Caco-2 (cell line): ENCODE measurements at regions of chr5 and their contacts with region 1.

Region 1: DNA sequence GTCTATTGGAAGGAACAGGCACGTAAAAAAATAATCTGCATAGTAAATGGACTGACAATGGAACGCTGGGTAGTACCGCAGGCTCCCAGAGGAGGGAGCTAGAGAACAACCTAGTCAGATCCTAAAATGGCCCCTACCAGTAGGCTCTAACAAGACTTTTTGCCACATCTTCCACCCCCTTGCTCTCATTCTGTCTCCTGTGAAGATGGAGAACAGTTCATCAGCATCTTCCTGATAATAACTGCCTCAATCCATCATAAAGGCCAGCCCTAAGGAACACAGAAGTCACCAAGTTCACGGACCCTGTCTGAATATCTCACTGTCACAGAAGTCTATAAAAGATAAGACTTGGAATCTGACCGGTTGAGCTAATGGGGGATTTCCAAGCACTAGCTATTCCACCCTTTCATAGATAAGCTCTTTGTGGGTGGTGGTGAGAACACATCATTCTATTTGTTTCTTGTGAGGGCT is 133.4 kb downstream of the SLC1A3 start:
- DNase-seq: peak; percentile 78 to 86
- H3K4me3 ChIP-seq: no peak overlapping the region
- H3K4me3 Mint-ChIP-seq: peak overlapping the region; percentile 46
- H3K27ac Mint-ChIP-seq: no peak overlapping the region
- H3K4me1 ChIP-seq: peaks cover 12% of the 10 kb centered on the region
- H3K4me1 Mint-ChIP-seq: peaks cover 19% of the 10 kb centered on the region
- H3K27me3 ChIP-seq: no peaks in the 10 kb centered on the region
- H3K27me3 Mint-ChIP-seq: peaks cover 5% of the 10 kb centered on the region
- CTCF ChIP-seq: peak; percentile 91 to 94

Region 2: DNA sequence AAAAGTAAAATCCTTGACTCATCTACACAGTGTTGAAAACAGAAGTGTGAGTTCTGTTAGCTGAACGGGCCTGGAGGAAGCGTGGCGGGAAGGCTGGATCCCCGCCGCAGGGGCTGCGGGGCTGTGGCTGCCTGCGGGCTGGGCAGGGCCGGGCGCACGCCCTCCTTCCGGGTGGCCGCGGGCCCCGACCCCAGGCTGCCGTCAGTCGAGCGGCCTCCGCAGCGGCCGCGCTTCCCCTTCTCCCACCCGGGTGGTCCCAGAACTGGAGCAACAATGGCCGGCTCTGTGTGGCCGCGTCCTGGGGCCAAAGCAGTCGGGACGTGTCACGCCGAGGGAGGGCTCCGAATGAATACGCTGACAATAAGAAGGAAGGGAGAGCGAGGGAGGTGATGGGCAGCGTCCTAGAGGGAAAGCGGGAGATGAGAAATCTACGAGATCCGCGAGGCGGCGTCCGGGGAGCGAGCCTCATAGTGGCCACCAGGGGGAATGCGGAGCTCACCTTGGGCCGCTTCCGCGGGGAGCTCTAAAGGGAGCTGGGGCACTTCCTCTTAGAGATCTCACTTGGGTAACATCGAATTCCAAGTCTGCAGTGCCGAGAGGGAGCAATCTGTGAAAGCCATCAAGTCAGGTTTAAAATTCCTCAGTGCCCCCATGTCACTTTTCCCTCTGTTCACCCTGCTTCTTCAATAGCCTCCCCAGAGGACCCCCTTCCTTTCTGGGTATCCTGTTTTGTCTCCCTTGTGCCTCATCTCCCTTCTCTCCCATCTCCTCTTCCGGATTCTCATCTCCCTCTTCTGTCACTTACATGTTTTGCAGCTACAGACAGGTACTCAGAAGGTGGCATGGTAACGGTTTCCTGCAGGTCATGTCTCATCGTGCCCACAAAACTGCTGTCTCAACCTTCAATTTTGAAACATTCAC is 49.5 kb before region 1 on chr5:
- CTCF ChIA-PET with region 1: no interaction called
- POLR2A ChIA-PET with region 1: no interaction called
- intact Hi-C with region 1: no loop called
- DNase-seq: peak; percentile 90 to 91
- H3K4me3 ChIP-seq: peak overlapping the region; percentile 71
- H3K4me3 Mint-ChIP-seq: peak overlapping the region; percentile 75
- H3K27ac Mint-ChIP-seq: peak overlapping the region; percentile 28
- H3K4me1 ChIP-seq: peaks cover 14% of the 10 kb centered on the region; the same call in 1 of the 2 replicates
- H3K4me1 Mint-ChIP-seq: peaks cover 10% of the 10 kb centered on the region
- H3K27me3 ChIP-seq: no peaks in the 10 kb centered on the region
- H3K27me3 Mint-ChIP-seq: no peaks in the 10 kb centered on the region
- CTCF ChIP-seq: peak; percentile 80 to 91

Region 3: DNA sequence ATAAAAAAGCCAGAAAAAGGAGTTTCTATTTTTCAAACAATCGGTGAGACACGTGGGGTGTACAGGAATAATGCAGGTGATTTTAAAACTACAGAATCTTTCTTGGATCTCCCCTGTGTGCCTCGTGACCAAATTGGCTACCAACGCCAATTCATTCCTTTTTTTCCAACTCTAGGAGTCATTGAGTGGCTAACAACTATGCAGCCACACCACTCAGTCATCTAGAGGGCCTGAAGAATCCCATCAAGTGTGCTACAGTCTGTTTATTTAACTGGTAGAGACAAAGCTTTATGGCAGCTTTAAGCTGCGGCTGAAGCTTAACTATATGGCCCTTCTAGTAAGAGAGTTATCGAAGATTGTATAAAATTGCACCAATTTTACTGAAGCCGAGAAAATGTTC is 23.7 kb after region 1 on chr5:
- CTCF ChIA-PET with region 1: interaction called, 3 read pairs
- POLR2A ChIA-PET with region 1: no interaction called
- intact Hi-C with region 1: loop called (anchors 1 kb)
- DNase-seq: no peak
- H3K4me3 ChIP-seq: no peak overlapping the region
- H3K4me3 Mint-ChIP-seq: no peak overlapping the region
- H3K27ac Mint-ChIP-seq: no peak overlapping the region
- H3K4me1 ChIP-seq: no peaks in the 10 kb centered on the region
- H3K4me1 Mint-ChIP-seq: no peaks in the 10 kb centered on the region
- H3K27me3 ChIP-seq: no peaks in the 10 kb centered on the region; the same call in 1 of the 2 replicates
- H3K27me3 Mint-ChIP-seq: peaks cover 10% of the 10 kb centered on the region
- CTCF ChIP-seq: no peak

Region 4: DNA sequence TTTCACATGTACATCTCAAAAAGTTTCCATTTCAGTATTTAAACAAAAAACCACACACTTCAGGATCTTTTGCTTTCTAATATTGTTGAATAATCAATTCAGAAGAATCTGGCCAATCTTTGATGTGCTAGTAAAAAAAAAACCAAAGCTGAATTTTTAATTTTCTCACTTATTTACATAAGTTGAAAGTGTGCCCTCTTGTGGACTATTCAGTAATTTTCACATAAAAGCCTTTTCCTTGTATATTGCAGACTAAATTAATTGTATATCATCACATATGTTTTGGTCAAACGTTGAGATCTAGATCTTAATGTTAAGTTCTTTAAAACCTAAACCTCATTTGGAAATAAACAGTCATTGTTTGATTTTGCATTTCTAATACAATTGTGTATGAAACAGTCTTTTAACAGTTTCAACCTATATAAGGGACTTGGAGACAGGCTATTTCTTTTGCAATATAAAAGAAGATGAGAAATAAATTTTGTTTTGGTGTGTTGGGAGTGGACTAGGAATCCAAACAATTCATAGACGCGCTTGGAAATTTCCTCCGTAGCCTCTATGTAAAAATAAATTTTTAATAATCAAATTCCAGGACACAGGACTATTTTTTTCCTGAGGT is 204.9 kb after region 1 on chr5:
- CTCF ChIA-PET with region 1: interaction called, 4 read pairs
- POLR2A ChIA-PET with region 1: interaction called, 3 read pairs
- intact Hi-C with region 1: loop called (anchors 1 kb)
- DNase-seq: peak in 1 of 2 experiments; percentile 30
- H3K4me3 ChIP-seq: no peak overlapping the region
- H3K4me3 Mint-ChIP-seq: no peak overlapping the region
- H3K27ac Mint-ChIP-seq: no peak overlapping the region
- H3K4me1 ChIP-seq: peaks cover under 1% of the 10 kb centered on the region; the same call in 1 of the 2 replicates
- H3K4me1 Mint-ChIP-seq: peaks cover 18% of the 10 kb centered on the region
- H3K27me3 ChIP-seq: no peaks in the 10 kb centered on the region
- H3K27me3 Mint-ChIP-seq: no peaks in the 10 kb centered on the region
- CTCF ChIP-seq: peak; percentile 48 to 64